ENCODE measurements at regions of chr1 and their contacts with region 1.

Region 1: GRCh38 chr1:246699095-246699735 is 25.0 kb upstream of the SCCPDH start:
- DNase-seq: peak; percentile 95
- H3K4me3 ChIP-seq: peak overlapping the region; percentile 17 to 37 (median 27)
- H3K27ac ChIP-seq: peak overlapping the region; percentile 6 to 74 (median 56)
- H3K4me1 ChIP-seq: peaks cover 0 to 10% (median 2%) of the 10 kb centered on the region in 4 donors
- H3K27me3 ChIP-seq: no peaks in the 10 kb centered on the region
- CTCF ChIP-seq: peak; percentile 62 to 79 (median 69)
- EP300 ChIP-seq: no peak
- POLR2A ChIP-seq: no peak

Region 2: GRCh38 chr1:245901037-245901436 is 798.2 kb before region 1 on chr1:
- intact Hi-C with region 1: no loop called
- DNase-seq: no peak
- H3K4me3 ChIP-seq: no peak overlapping the region
- H3K27ac ChIP-seq: no peak overlapping the region
- H3K4me1 ChIP-seq: peaks cover 0 to 5% (median 5%) of the 10 kb centered on the region in 4 donors
- H3K27me3 ChIP-seq: no peaks in the 10 kb centered on the region
- CTCF ChIP-seq: no peak
- EP300 ChIP-seq: no peak
- POLR2A ChIP-seq: no peak

Region 3: DNA sequence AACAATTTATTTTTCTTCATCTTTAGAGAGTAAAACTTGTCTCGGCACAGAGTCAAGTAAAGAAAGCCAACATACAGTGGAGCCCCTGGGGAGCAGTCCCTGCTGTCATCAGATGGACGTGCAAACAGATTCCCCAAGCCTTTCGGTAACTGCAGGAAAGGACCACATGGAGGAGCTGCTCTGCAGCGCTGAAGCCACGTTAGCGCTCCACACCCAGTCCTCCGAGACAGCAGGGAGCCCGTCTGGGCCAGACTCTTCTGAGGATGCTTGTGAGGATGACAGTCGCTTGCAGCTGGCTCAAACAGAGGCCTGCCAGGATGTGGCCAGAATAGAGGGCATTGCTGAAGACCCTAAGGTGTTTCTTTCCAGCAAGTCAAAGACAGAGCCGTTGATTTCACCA is 52.1 kb before region 1 on chr1:
- intact Hi-C with region 1: loop called (anchors 5 kb)
- DNase-seq: peak; percentile 77
- H3K4me3 ChIP-seq: no peak overlapping the region
- H3K27ac ChIP-seq: peak overlapping the region; percentile 54 to 75 (median 60)
- H3K4me1 ChIP-seq: peaks cover 0 to 9% (median 6%) of the 10 kb centered on the region in 4 donors
- H3K27me3 ChIP-seq: no peaks in the 10 kb centered on the region
- CTCF ChIP-seq: peak; percentile 10 to 49 (median 29)
- EP300 ChIP-seq: no peak
- POLR2A ChIP-seq: no peak

Region 4: GRCh38 chr1:246658567-246658966 is 40.6 kb before region 1 on chr1:
- intact Hi-C with region 1: no loop called
- DNase-seq: no peak
- H3K4me3 ChIP-seq: no peak overlapping the region
- H3K27ac ChIP-seq: no peak overlapping the region
- H3K4me1 ChIP-seq: no peaks in the 10 kb centered on the region
- H3K27me3 ChIP-seq: no peaks in the 10 kb centered on the region
- CTCF ChIP-seq: no peak
- EP300 ChIP-seq: no peak
- POLR2A ChIP-seq: no peak

Measured in sigmoid colon (tissue), 7 donors.